Activated B cell treated with CpG ODN at 0.5 μM for 24 hours (primary cell): ENCODE measurements at regions of chr3 and their contacts with region 1.

Region 1: DNA sequence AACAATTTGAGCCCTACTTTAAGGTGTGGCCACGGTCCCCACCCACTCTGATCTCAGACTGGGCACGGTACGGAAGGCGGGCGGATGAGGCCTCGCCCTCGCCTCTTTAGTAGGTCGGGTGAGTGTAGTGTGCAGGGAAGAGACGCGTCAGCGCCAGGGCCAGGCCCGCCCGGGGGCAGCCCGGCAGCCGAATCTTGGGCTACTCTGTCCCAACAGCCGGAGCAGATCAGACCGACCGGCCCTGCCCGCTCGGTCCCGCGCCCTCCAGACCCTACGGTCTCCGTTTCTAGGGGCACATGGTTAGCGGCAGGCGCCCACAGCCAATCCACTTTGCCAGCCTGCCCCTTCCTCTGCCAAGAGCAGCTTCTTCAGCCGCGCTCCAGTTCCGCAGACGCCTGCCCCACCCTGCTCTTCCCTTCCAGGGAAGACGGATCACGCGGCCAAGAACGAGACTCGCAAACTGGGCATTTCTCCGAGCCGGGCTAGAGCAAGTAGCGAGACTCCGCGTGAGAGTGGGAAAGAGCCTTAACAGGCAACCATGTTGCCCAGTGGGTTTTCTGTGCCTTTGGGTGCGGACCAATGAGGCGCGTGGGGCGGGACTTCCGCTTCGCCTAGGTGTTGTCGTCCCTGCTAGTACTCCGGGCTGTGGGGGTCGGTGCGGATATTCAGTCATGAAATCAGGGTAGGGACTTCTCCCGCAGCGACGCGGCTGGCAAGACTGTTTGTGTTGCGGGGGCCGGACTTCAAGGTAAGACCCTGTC is at the start of gene RNF13:
- DNase-seq: peak; percentile 87
- ATAC-seq: peak; percentile 88
- H3K4me3 Mint-ChIP-seq: peak within 1 kb of the TSS; percentile 99
- H3K27ac Mint-ChIP-seq: peak within 1 kb of the TSS; percentile 100
- H3K4me1 Mint-ChIP-seq: peaks cover 53% of the 10 kb centered on the region
- H3K27me3 Mint-ChIP-seq: peaks cover 3% of the 10 kb centered on the region
- CTCF ChIP-seq: no peak
- total RNA-seq, gene RNF13: 57.6 and 59.6 TPM in 2 replicates

Region 2: DNA sequence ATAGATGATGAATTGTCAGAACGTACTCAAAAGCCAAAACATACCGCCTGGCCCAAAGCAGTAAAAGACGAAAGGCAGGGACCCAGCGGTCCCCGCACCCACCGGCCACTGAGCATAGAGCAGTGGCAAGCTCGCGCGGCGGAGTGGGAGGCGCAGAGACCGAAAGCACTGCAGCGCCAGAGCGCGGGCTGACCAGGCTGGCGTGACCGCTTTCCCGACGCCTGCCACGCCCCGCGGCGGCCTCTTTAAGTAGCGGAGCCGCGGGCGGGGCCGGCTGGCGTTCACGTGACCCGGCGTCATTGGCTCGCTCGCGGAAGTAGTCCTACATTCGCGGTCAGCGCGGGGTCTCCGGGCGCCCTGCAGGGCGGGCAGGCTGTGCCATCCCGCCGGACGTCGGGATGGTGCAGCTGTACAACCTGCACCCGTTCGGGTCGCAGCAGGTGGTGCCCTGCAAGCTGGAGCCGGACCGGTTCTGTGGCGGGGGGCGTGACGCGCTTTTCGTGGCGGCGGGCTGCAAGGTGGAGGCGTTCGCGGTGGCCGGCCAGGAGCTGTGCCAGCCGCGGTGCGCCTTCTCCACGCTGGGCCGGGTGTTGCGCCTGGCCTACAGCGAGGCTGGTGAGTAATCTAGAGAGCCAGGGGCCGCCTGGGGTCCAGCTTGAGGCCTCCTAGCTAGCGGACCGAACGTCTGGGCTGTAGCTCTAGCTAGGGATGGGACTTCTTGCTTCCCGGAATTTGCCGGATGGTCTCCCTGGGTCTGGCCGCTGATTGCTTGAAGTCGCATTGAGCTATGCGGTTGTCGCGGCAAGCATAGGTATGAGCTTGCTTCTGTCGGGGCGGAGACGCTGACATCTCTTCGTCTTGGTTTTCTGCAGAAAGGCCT is 683.2 kb before region 1 on chr3 and contains the start of gene HPS3:
- CTCF ChIA-PET with region 1: no interaction called
- POLR2A ChIA-PET with region 1: no interaction called
- intact Hi-C with region 1: loop called (anchors 10 kb)
- DNase-seq: peak; percentile 90
- ATAC-seq: peak; percentile 95
- H3K4me3 Mint-ChIP-seq: peak within 1 kb of the TSS; percentile 98
- H3K27ac Mint-ChIP-seq: peak within 1 kb of the TSS; percentile 89
- H3K4me1 Mint-ChIP-seq: peaks cover 48% of the 10 kb centered on the region
- H3K27me3 Mint-ChIP-seq: no peaks in the 10 kb centered on the region
- CTCF ChIP-seq: no peak
- total RNA-seq, gene HPS3: 30.1 and 30.5 TPM in 2 replicates

Region 3: GRCh38 chr3:149765762-149766334 is 46.9 kb before region 1 on chr3:
- CTCF ChIA-PET with region 1: interaction called, 40 read pairs
- POLR2A ChIA-PET with region 1: interaction called, 4 read pairs
- intact Hi-C with region 1: loop called (anchors 1 kb)
- DNase-seq: no peak
- ATAC-seq: no peak
- H3K4me3 Mint-ChIP-seq: no peak overlapping the region
- H3K27ac Mint-ChIP-seq: no peak overlapping the region
- H3K4me1 Mint-ChIP-seq: no peaks in the 10 kb centered on the region
- H3K27me3 Mint-ChIP-seq: peaks cover 12% of the 10 kb centered on the region
- CTCF ChIP-seq: no peak

Region 4: GRCh38 chr3:149783576-149783975 is 29.2 kb before region 1 on chr3:
- CTCF ChIA-PET with region 1: interaction called, 6 read pairs
- POLR2A ChIA-PET with region 1: no interaction called
- intact Hi-C with region 1: loop called (anchors 2 kb)
- DNase-seq: no peak
- ATAC-seq: peak; percentile 26
- H3K4me3 Mint-ChIP-seq: no peak overlapping the region
- H3K27ac Mint-ChIP-seq: peak overlapping the region; percentile 84
- H3K4me1 Mint-ChIP-seq: peaks cover 46% of the 10 kb centered on the region
- H3K27me3 Mint-ChIP-seq: no peaks in the 10 kb centered on the region
- CTCF ChIP-seq: no peak

Region 5: GRCh38 chr3:149990423-149990948 is 177.7 kb after region 1 on chr3:
- CTCF ChIA-PET with region 1: no interaction called
- POLR2A ChIA-PET with region 1: no interaction called
- intact Hi-C with region 1: no loop called
- DNase-seq: no peak
- ATAC-seq: no peak
- H3K4me3 Mint-ChIP-seq: no peak overlapping the region
- H3K27ac Mint-ChIP-seq: no peak overlapping the region
- H3K4me1 Mint-ChIP-seq: no peaks in the 10 kb centered on the region
- H3K27me3 Mint-ChIP-seq: peaks cover 13% of the 10 kb centered on the region
- CTCF ChIP-seq: no peak

Region 6: DNA sequence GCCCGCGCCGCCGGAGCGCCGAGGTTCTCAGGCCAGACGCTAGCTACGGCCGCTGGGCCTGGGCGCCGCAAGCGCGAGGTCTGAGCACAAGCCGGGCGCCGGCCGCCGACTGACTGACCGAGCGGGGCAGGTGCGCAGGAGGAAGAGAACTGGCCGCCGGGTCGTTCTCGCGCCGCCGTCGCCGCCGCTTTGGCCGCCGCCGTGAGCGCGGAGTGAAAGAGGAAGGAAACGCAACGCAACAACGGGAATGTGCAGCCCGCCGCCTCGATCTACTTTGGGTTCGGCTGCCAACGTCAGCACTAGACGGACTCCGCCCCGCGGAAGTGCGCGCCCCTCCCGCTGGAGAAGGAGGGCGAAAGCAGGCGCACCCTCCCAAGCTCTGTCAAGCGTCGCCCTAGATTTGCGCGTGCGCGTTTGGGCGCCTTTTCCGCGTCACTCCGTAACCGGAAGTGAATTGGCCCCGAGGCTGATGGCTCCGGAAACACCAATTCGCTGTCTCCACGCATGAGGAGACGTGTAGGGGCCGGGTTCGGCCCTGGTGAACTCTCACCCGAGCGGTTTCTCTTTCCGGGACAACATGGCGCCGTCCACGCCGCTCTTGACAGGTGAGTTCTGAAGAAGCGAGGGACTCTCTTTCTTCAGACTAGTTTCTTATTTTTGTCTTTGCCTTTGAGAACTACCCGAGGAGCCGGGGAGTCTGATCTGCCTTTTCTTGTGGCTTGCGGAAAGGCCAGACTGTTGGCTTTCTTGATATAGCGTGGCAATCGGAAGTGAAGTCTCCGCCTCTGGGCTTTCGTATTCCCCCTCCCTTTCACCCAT is 733.6 kb after region 1 on chr3 and contains the starts of genes EIF2A and SERP1:
- CTCF ChIA-PET with region 1: no interaction called
- POLR2A ChIA-PET with region 1: no interaction called
- intact Hi-C with region 1: loop called (anchors 1 kb)
- DNase-seq: peak; percentile 98
- ATAC-seq: peak; percentile 92
- H3K4me3 Mint-ChIP-seq: peak within 1 kb of the TSS; percentile 96
- H3K27ac Mint-ChIP-seq: peak within 1 kb of the TSS; percentile 99
- H3K4me1 Mint-ChIP-seq: peaks cover 50% of the 10 kb centered on the region
- H3K27me3 Mint-ChIP-seq: no peaks in the 10 kb centered on the region
- CTCF ChIP-seq: no peak
- total RNA-seq, gene EIF2A: 105 and 109 TPM in 2 replicates
- total RNA-seq, gene SERP1: 87.2 and 88.2 TPM in 2 replicates